Mammary epithelial cell (primary cell): ENCODE measurements at regions of chr12 and their contacts with region 1.

Region 1: DNA sequence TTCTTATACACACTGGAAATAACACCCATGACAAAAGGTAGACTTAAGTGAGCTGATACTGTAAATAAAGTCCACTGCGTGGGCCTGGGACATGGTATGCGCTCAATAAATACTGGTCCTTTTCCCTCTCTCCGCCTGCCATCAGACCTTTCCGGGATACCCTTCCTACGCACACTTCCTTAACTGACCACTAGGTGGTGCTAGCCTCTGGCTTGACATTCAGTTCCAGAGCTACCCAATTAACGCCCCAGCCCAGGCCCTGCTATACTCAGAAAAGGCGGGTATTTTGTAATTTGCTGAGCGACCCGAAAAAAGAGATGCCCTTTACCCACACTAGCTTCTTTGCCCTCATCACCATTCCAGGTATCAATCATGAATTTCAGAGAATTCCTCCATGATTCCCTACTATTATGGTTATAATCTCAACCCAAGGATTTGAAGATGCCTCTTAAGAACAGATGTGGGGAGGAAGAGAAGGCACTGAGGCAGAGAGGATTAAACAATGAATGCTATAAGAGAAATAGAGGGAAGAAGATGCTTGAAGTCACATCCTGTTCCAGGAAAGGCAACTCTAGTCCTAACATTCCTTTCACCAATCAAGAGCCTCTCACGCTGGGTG is 3.9 kb upstream of the LRP1 start:
- DNase-seq: peak; percentile 55
- H3K4me3 ChIP-seq: no peak overlapping the region
- H3K27ac ChIP-seq: no peak overlapping the region
- H3K4me1 ChIP-seq: peaks cover 10% of the 10 kb centered on the region
- H3K27me3 ChIP-seq: no peaks in the 10 kb centered on the region
- CTCF ChIP-seq: peak; percentile 91 to 95

Region 2: GRCh38 chr12:57078519-57079404 is 45.6 kb before region 1 on chr12 and contains the start of gene NEMP1:
- CTCF ChIA-PET with region 1: no interaction called
- dilution Hi-C with region 1: loop called (anchors 5 kb)
- in situ Hi-C with region 1: no loop called
- intact Hi-C with region 1: no loop called
- DNase-seq: peak; percentile 100
- H3K4me3 ChIP-seq: peak within 1 kb of the TSS; percentile 82 to 97 (median 92)
- H3K27ac ChIP-seq: peak within 1 kb of the TSS; percentile 83
- H3K4me1 ChIP-seq: peaks cover 6% of the 10 kb centered on the region
- H3K27me3 ChIP-seq: no peaks in the 10 kb centered on the region
- CTCF ChIP-seq: no peak
- total RNA-seq, gene NEMP1: 7.3 to 31.0 TPM

Region 3: DNA sequence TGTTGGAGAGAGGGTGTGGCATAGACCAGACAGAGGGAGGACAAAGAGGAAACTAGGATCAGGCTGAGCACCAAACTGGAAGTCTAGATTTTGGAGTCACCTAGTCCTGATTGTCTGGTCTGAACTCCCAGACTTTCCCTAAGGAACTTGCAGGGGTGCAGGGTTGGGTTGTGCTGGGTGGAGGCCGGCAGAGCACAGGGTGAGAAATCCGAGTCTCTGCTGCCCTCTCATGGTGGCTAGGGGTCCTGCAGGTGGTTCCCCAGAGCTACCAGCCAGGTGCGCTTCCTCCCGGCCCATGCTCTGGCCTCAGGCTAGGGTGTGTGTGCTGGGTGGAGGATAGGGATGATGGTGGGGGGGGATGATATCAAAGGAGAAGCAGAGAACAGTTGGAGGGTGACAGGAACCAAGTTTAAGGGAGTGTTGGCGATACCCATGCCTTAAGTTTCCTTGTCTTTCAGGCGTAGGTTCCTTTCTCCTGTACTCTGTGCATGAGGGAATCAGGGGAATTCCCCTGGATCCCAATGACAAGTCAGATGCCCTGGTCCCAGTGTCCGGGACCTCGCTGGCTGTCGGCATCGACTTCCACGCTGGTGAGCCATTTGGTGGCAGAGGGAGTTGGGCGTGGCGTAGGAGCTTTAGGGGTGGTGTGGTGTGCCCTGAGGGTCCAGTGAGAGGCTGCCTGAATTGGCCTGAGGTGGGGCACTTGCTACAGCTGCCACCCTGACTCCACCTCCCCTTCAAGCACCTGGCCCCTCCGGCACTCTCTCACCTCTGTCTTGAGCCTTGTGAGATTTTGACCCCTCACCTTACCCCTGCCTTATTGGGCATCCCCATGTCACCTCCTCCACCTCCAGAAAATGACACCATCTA is 58.8 kb after region 1 on chr12:
- CTCF ChIA-PET with region 1: interaction called, 3 read pairs
- dilution Hi-C with region 1: no loop called
- in situ Hi-C with region 1: loop called in 1 of 2 experiments (anchors 5 kb)
- intact Hi-C with region 1: loop called (anchors 1 kb)
- DNase-seq: peak; percentile 79
- H3K4me3 ChIP-seq: no peak overlapping the region
- H3K27ac ChIP-seq: no peak overlapping the region
- H3K4me1 ChIP-seq: peaks cover 22% of the 10 kb centered on the region
- H3K27me3 ChIP-seq: no peaks in the 10 kb centered on the region
- CTCF ChIP-seq: peak; percentile 91 to 96

Region 4: GRCh38 chr12:57229634-57230380 is 105.4 kb after region 1 on chr12 and contains the start of gene SHMT2:
- CTCF ChIA-PET with region 1: no interaction called
- dilution Hi-C with region 1: loop called (anchors 5 kb)
- in situ Hi-C with region 1: no loop called
- intact Hi-C with region 1: no loop called
- DNase-seq: peak; percentile 85
- H3K4me3 ChIP-seq: peak within 1 kb of the TSS; percentile 49 to 64 (median 60)
- H3K27ac ChIP-seq: peak within 1 kb of the TSS; percentile 74
- H3K4me1 ChIP-seq: peaks cover 9% of the 10 kb centered on the region
- H3K27me3 ChIP-seq: no peaks in the 10 kb centered on the region
- CTCF ChIP-seq: no peak
- total RNA-seq, gene SHMT2: 266 to 337 TPM

Region 5: DNA sequence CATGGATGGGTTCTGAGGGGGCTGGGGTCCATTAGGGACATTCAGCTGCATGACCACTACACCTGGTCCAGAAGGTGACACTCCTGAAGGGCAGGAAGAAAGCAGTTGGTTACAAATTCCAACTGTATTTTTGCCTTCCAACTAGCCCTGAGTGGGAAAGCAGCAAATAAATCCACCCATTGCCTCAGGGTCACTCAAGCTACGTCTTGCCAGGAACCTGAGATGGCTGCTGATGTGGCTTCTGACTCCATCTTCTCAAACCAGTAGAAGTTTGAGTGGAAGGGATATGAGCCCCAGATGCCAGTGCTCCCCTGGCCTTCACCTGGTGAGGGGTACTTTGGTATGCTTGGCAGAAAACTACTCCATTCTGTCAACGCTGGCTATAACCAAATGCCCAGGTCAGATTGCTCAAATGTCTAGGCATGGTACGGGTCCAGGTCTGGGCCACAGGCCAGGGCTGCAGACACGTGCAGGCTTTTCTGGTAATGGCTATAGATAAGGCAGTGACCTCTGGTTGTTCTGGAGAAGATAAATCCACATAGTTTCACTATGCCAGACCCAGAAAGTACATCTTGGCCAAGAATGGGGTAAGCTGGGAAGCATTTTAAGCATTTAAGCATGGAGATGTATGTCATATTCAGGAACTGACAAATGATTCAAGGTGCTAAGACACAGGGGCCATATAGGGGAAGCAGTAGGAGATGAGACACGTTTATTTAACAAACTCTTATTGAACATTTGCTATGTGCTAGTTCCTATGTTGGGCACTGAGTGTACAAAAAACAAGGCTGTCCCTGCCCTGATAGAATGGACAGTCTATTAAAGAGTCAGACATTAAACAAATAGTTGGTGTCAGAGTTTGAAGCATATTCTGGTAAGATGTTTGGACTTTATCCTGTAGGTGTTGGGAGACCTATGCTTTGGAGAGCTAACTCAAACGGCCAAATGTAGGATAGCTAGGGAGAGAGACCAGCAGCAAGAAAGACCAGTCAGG is 134.9 kb after region 1 on chr12:
- CTCF ChIA-PET with region 1: no interaction called
- dilution Hi-C with region 1: no loop called
- in situ Hi-C with region 1: no loop called
- intact Hi-C with region 1: no loop called
- DNase-seq: no peak
- H3K4me3 ChIP-seq: no peak overlapping the region
- H3K27ac ChIP-seq: no peak overlapping the region
- H3K4me1 ChIP-seq: no peaks in the 10 kb centered on the region
- H3K27me3 ChIP-seq: no peaks in the 10 kb centered on the region
- CTCF ChIP-seq: no peak

Region 6: GRCh38 chr12:57377103-57377840 is 252.9 kb after region 1 on chr12:
- CTCF ChIA-PET with region 1: no interaction called
- dilution Hi-C with region 1: no loop called
- in situ Hi-C with region 1: no loop called
- intact Hi-C with region 1: no loop called
- DNase-seq: no peak
- H3K4me3 ChIP-seq: no peak overlapping the region
- H3K27ac ChIP-seq: no peak overlapping the region
- H3K4me1 ChIP-seq: peaks cover 5% of the 10 kb centered on the region
- H3K27me3 ChIP-seq: no peaks in the 10 kb centered on the region
- CTCF ChIP-seq: no peak